HepG2 (cell line): ENCODE measurements at regions of chr12 and their contacts with region 1.

Region 1: DNA sequence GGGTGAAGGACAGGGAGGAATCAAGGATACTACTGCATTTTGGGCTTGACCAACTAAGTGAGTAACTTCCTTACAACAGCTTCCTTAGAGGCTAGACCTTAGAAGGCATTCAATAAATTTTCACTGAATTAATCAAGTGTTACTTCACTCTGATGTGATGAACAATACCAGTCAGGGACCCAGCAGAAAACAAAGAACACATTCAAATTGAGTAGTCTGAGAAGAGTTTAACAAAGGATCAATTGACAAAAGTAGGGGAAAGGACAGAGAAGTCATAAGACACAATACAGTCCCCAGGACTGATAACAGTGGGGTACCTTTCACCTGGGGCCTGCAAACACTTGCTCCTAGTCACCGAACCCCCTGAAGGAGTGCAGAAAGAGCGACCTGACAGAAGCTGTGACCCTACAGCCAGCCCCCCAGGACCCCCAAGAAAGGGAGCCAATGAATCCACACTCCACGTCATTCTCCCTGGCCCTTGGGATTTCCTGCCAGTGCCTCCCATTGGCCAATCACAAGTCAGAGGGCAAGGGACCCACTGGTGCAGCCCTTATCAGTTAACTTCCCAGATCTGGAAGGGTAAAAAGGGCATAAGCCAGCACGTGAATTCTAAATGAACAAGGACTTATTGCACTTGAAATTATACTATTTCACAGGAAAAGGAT is 6.9 kb downstream of the ANAPC5 start:
- DNase-seq: no peak
- ATAC-seq: no peak
- H3K4me3 ChIP-seq: no peak overlapping the region
- H3K27ac ChIP-seq: no peak overlapping the region
- H3K4me1 ChIP-seq: peaks cover 2% of the 10 kb centered on the region
- H3K27me3 ChIP-seq: no peaks in the 10 kb centered on the region
- CTCF ChIP-seq: no peak
- EP300 ChIP-seq: no peak
- POLR2A ChIP-seq: no peak
- RAD21 ChIP-seq: no peak

Region 2: GRCh38 chr12:120216742-120217605 is 1128.3 kb before region 1 on chr12:
- CTCF ChIA-PET with region 1: no interaction called
- POLR2A ChIA-PET with region 1: no interaction called
- in situ Hi-C with region 1: no loop called
- intact Hi-C with region 1: no loop called
- DNase-seq: no peak
- ATAC-seq: no peak
- H3K4me3 ChIP-seq: no peak overlapping the region
- H3K27ac ChIP-seq: no peak overlapping the region
- H3K4me1 ChIP-seq: peaks cover 40% of the 10 kb centered on the region
- H3K27me3 ChIP-seq: no peaks in the 10 kb centered on the region; a peak in 1 of 5 replicates
- CTCF ChIP-seq: no peak
- EP300 ChIP-seq: no peak
- POLR2A ChIP-seq: 0 out of 4 replicates have a peak, but pooled peaks of 1 of the 2 experiments have one; percentile 23
- RAD21 ChIP-seq: no peak

Region 3: GRCh38 chr12:121196902-121197301 is 148.4 kb before region 1 on chr12:
- CTCF ChIA-PET with region 1: no interaction called
- POLR2A ChIA-PET with region 1: no interaction called
- in situ Hi-C with region 1: no loop called
- intact Hi-C with region 1: no loop called
- DNase-seq: no peak
- ATAC-seq: no peak
- H3K4me3 ChIP-seq: no peak overlapping the region
- H3K27ac ChIP-seq: no peak overlapping the region
- H3K4me1 ChIP-seq: no peaks in the 10 kb centered on the region
- H3K27me3 ChIP-seq: peaks cover 0 to 7% of the 10 kb centered on the region in 2 experiments; a peak in 1 of 5 replicates
- CTCF ChIP-seq: no peak
- EP300 ChIP-seq: no peak
- POLR2A ChIP-seq: no peak
- RAD21 ChIP-seq: no peak

Region 4: DNA sequence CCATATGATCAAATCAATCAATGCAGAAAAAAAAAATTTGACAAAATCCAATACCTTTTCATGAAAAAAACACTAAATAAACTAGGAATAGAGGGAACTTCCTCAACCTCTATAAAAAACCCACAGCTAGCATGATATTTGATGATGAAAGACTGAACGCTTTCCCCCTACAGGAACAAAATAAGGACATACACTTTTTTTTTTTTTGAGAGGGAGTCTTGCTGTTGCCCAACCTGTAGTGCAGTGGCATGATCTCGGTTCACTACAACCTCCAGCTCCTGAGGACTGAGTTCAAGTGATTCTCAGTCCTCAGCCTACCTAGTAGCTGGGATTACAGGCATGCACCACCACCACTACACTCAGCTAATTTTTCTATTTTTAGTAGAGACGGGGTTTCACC is 30.9 kb before region 1 on chr12:
- CTCF ChIA-PET with region 1: no interaction called
- POLR2A ChIA-PET with region 1: no interaction called
- in situ Hi-C with region 1: no loop called
- intact Hi-C with region 1: loop called (anchors 2 kb)
- DNase-seq: no peak
- ATAC-seq: no peak
- H3K4me3 ChIP-seq: no peak overlapping the region
- H3K27ac ChIP-seq: no peak overlapping the region
- H3K4me1 ChIP-seq: peaks cover 10% of the 10 kb centered on the region; the same call in 1 of the 2 replicates
- H3K27me3 ChIP-seq: no peaks in the 10 kb centered on the region
- CTCF ChIP-seq: no peak
- EP300 ChIP-seq: no peak
- POLR2A ChIP-seq: no peak
- RAD21 ChIP-seq: no peak